Naive thymus-derived CD4-positive, alpha-beta T cell (primary cell): ENCODE measurements at regions of chr4 and their contacts with region 1.

Region 1: GRCh38 chr4:22678940-22679854 is 13.5 kb upstream of the GBA3 start:
- DNase-seq: no peak
- ATAC-seq: no peak
- H3K4me3 ChIP-seq: no peak overlapping the region
- H3K4me3 Mint-ChIP-seq: peak overlapping the region in 1 of 10 donors; percentile 48
- H3K27ac ChIP-seq: no peak overlapping the region
- H3K27ac Mint-ChIP-seq: peak overlapping the region in 5 of 9 donors; percentile 31 to 73 (median 64)
- H3K4me1 ChIP-seq: peaks cover 0 to 24% of the 10 kb centered on the region in 2 donors
- H3K4me1 Mint-ChIP-seq: peaks cover 9 to 76% (median 66%) of the 10 kb centered on the region in 7 donors
- H3K27me3 ChIP-seq: no peaks in the 10 kb centered on the region
- H3K27me3 Mint-ChIP-seq: no peaks in the 10 kb centered on the region

Region 2: GRCh38 chr4:22444813-22445212 is 234.4 kb before region 1 on chr4:
- CTCF ChIA-PET with region 1: no interaction called
- POLR2A ChIA-PET with region 1: no interaction called
- intact Hi-C with region 1: loop called in 1 of 2 experiments (anchors 10 kb)
- DNase-seq: peak in 1 of 9 donors; percentile 7
- ATAC-seq: peak; percentile 29
- H3K4me3 ChIP-seq: no peak overlapping the region
- H3K4me3 Mint-ChIP-seq: peak overlapping the region; percentile 31 to 88 (median 80)
- H3K27ac ChIP-seq: peak overlapping the region; percentile 57
- H3K27ac Mint-ChIP-seq: peak overlapping the region; percentile 85 to 96 (median 94)
- H3K4me1 ChIP-seq: peaks cover 0 to 16% of the 10 kb centered on the region in 2 donors
- H3K4me1 Mint-ChIP-seq: peaks cover 0 to 63% (median 37%) of the 10 kb centered on the region in 7 donors
- H3K27me3 ChIP-seq: no peaks in the 10 kb centered on the region
- H3K27me3 Mint-ChIP-seq: no peaks in the 10 kb centered on the region

Region 3: GRCh38 chr4:22707390-22707789 is 28.2 kb after region 1 on chr4:
- CTCF ChIA-PET with region 1: no interaction called
- POLR2A ChIA-PET with region 1: no interaction called
- intact Hi-C with region 1: no loop called
- DNase-seq: no peak
- ATAC-seq: no peak
- H3K4me3 ChIP-seq: no peak overlapping the region
- H3K4me3 Mint-ChIP-seq: no peak overlapping the region
- H3K27ac ChIP-seq: no peak overlapping the region
- H3K27ac Mint-ChIP-seq: no peak overlapping the region
- H3K4me1 ChIP-seq: no peaks in the 10 kb centered on the region
- H3K4me1 Mint-ChIP-seq: peaks cover 0 to 10% (median 0%) of the 10 kb centered on the region in 7 donors
- H3K27me3 ChIP-seq: no peaks in the 10 kb centered on the region
- H3K27me3 Mint-ChIP-seq: peaks cover 2 to 12% (median 10%) of the 10 kb centered on the region in 5 donors